ENCODE measurements at regions of chrX and their contacts with region 1.

Region 1: DNA sequence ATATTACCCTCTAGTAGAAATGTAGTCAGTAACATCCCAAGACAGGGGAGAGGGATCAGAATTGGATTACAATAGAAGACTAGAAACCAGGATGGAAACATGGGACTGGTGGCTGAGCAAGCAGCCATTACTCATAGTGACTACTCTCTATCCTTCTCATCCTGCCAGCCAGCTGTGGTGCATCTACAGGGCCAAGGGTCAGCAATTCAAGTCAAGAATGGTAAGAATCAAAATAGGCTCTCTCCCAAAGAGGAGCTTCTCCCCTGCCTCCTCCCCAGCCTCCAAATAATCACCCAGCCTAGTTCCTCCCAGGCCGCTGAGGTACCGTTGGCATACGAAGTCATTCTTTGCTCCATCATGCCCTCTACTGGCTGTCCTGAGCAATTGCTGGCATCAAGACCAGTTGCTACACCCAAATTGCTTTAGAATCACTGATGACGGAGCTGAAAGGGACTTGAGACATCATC is 19.4 kb downstream of the AWAT2 start:
- DNase-seq: no peak
- ATAC-seq: peak; percentile 64 to 71

Region 2: DNA sequence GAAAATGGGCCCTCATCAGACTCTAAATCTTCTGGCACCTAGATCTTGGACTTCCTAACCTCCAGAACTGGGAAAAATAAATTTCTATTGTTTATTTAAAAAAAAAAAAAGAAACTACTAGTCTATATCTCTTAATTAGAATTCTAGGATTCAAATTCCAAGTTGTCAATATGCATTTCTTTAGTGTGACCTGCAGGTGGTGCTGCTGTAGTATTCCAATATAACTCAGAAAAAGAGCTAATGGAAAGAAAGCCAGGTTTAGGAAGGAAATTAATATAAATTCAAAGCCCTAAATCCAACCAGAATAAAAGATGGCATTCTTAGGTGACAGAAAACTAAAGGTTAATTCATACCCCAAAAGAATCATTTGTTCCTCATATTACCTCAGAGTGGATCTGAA is 606.2 kb before region 1 on chrX:
- intact Hi-C with region 1: loop called in 1 of 2 experiments (anchors 10 kb)
- DNase-seq: no peak
- ATAC-seq: no peak

Region 3: GRCh38 chrX:69493193-69493592 is 537.1 kb before region 1 on chrX:
- intact Hi-C with region 1: loop called in 1 of 2 experiments (anchors 5 kb)
- DNase-seq: no peak
- ATAC-seq: peak; percentile 48 to 71

Region 4: DNA sequence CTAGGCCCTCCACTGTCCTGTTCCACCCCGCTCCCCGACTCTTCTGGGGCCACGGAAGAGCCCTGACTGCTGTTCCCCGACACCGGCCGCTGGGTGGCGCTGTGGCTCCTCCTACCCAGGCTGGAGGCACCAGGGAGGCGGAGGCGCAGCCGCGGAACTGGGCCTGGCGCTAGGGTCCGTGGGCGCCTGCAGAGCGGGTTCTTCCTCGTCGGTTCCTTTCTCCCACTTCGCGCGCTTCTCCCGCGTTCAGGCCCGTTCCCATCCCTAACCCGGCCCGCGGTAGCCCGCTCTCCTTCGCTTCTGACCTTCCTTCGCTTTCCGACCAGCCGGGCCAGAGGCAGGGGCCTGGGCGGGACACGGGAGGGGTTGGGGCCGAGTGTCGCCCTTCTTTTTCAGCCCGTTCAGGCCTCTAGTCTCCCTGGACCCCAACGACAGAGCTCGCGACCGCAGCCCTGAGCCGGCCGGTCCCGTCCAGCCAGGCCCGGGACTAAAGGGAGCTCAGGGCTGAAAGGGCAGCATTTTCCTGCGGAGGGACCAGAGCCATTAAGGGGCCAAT is 491.9 kb before region 1 on chrX:
- intact Hi-C with region 1: loop called (anchors 5 to 10 kb)
- DNase-seq: peak; percentile 78
- ATAC-seq: peak; percentile 93 to 98

Region 5: GRCh38 chrX:69615779-69616456 is 414.4 kb before region 1 on chrX and contains the start of gene EDA:
- intact Hi-C with region 1: loop called in 1 of 2 experiments (anchors 5 kb)
- DNase-seq: peak; percentile 90
- ATAC-seq: peak; percentile 98
- total RNA-seq, gene EDA: 13.7 to 17.5 TPM

Region 6: GRCh38 chrX:70087857-70088630 is 57.7 kb after region 1 on chrX:
- intact Hi-C with region 1: loop called in 1 of 2 experiments (anchors 5 kb)
- DNase-seq: no peak
- ATAC-seq: peak; percentile 47 to 55

Region 7: GRCh38 chrX:70096052-70096451 is 65.7 kb after region 1 on chrX:
- intact Hi-C with region 1: loop called (anchors 5 kb)
- DNase-seq: no peak
- ATAC-seq: no peak

Region 8: DNA sequence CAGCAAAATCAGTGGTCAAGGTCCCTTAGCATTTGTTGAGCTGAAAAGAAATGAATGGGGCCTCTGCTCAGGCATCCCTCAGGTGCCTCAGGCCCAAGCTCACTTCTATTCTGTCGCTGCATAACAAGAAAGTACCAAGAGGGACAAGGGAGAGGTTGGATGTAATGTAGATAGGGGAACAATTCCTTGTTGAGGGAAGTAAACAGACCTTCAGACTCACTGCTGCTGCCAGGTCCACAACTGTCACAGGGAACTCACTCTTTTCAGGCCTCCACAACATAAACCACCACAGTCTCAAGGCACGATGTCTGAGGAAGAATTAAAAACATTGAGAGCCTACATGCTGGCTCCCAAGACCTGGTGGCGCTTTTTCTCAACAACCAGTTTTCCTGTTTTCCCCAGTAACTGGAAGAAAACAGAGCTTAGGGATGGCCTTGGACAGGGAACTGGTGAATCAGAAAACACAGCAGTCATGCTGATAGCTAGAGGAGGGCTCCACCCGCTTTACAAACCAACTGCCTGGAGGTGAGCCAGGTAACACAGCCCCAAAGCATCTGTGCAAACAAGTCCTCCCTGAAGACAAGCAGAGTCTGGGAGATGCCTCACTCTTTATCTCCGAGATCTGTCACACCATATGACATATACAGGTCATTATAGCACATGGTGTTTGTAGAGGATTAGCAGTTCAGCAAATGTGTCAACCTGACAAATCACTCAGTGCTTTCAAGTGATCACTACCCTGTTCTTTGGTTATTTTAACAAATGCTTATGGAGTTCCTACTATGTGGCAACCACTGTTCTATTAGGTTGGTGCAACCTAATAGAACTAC is 189.8 kb after region 1 on chrX:
- intact Hi-C with region 1: no loop called
- DNase-seq: no peak
- ATAC-seq: peak; percentile 57 to 89